ENCODE measurements at regions of chr1 and their contacts with region 1.

Region 1: DNA sequence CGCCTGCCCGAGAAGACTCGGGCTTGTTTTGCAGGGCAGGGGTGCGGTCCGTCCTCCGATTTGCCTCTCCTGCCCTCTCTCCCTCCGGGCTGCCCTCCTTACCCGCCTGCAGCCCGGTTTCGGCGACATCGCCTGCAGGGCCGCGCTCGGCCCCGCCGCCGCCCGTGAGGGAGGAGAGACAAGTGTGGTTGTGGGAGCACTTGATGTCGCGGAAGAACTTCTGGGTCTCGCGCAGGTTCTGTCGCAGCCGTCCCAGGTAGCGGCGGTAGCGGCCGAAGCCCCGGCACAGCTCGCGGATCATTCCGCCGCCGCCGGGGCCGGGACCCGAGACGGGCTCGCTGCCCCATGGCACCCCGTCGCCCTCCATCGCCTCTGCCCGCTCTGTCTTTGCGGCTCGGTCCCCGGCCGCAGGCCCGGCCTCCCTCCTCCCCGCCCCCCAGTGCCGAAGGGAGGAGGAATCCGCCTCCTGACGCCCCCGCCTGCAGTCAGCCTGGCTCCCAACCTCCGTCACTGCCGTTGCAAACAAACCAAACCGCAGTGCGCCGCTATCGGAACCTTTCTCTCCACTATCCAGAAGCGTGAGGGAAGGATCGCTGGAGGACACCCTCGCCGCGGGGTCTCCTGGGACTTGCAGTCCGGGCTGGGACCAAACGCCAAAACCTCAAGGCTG is at the start of gene DSTYK:
- DNase-seq: peak; percentile 92 to 99 (median 96)

Region 2: DNA sequence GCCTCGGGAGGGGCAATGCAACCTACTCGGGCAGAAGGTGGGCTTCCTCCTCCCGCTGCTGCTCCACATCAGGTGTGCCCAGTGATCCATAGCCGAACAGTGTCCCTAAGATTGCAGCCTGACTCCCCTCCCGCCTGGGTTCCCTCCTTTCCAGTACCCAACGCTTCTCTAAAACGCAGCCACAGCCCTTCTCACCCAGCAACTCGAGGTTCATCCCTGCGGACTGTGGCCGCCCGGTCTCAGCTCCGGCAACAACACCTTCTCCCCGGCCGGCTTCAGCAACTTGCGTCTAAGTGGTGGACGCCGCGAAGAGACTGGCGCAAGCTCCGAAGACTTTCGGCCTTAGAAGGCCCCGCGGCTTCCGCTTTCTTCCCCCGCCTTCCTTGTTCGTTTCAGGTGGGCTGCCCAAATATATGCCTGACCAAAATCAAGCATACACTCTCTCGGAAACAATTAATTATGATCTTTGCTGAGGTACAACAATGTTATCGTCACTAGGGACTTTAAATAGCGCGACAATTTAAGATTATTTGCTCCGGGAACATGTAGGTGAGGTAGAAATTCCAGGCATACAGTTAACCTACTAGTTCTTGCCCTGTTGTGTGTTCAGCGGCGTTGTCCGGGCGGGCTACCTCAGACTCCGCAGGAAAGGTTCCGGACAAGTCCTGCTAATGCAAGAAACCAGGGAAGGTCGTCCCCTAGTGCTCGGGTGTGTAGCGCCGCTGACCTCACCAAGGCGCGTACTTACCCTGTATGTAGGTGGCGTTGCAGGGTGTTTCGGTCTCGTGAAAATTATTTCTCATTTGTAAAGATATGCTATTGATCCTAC is 89.4 kb before region 1 on chr1 and contains the start of gene RBBP5:
- intact Hi-C with region 1: loop called (anchors 1 kb)
- DNase-seq: peak; percentile 91 to 99 (median 94)

Region 3: DNA sequence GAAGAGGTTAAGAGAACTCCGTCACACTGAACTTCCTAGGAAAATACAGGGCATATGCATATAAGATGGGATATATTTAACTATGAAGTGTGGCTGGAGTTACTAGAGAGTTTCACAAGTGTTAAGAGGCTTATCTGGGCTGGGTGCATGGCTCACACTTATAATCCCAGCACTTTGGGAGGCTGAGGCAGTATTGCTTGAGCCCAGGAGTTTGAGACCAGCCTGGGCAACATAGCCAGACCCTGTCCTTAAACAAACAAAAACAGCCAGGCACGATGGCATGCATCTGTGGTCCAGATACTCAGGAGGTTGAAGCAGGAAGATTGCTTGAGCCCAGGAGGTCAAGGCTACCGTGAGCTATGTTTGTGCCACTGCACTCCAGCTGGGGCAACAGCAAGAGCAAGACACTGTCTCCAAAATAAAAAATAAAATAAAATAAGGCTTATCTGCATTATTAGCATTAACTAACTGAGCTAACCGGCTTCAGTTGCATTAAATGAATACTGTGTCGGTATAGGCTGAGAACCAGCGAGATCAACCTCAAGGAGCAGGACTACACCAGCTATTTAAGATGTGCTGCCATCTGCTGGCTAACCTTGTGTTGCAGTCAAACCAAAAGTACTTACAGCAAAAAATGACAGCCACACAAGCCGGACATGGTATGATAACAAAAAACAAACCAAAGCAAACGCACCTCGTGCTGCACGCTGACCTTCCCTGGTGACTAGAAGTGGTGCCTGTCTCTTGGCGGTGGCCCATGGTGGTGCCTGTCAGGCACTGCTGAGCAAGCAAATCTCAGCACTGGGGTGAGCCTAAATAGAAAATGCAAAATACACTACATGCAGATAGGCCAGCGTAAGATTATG is 69.8 kb before region 1 on chr1:
- intact Hi-C with region 1: loop called (anchors 5 kb)
- DNase-seq: peak in 9 of 10 donors; percentile 34 to 93 (median 78)

Region 4: GRCh38 chr1:205227584-205228006 is 16.3 kb after region 1 on chr1 and contains the start of gene TMCC2:
- intact Hi-C with region 1: loop called (anchors 1 kb)
- DNase-seq: peak; percentile 95 to 99 (median 97)